Mammary epithelial cell (primary cell): ENCODE measurements at regions of chr17 and their contacts with region 1.

Region 1: GRCh38 chr17:42819944-42820535 is 4.0 kb downstream of the BECN1 start:
- DNase-seq: peak; percentile 32
- H3K4me3 ChIP-seq: no peak overlapping the region
- H3K27ac ChIP-seq: no peak overlapping the region
- H3K4me1 ChIP-seq: peaks cover 6% of the 10 kb centered on the region
- H3K27me3 ChIP-seq: no peaks in the 10 kb centered on the region
- CTCF ChIP-seq: peak; percentile 75 to 90

Region 2: GRCh38 chr17:42577532-42578281 is 242.3 kb before region 1 on chr17 and contains the start of gene PSMC3IP:
- CTCF ChIA-PET with region 1: no interaction called
- dilution Hi-C with region 1: no loop called
- in situ Hi-C with region 1: loop called in 1 of 2 experiments (anchors 25 kb)
- intact Hi-C with region 1: loop called (anchors 1 kb)
- DNase-seq: peak; percentile 94
- H3K4me3 ChIP-seq: peak within 1 kb of the TSS; percentile 67 to 78 (median 73)
- H3K27ac ChIP-seq: peak within 1 kb of the TSS; percentile 58
- H3K4me1 ChIP-seq: peaks cover 16% of the 10 kb centered on the region
- H3K27me3 ChIP-seq: no peaks in the 10 kb centered on the region
- CTCF ChIP-seq: peak; percentile 9 to 54
- total RNA-seq, gene PSMC3IP: 2.2 to 25.2 TPM

Region 3: DNA sequence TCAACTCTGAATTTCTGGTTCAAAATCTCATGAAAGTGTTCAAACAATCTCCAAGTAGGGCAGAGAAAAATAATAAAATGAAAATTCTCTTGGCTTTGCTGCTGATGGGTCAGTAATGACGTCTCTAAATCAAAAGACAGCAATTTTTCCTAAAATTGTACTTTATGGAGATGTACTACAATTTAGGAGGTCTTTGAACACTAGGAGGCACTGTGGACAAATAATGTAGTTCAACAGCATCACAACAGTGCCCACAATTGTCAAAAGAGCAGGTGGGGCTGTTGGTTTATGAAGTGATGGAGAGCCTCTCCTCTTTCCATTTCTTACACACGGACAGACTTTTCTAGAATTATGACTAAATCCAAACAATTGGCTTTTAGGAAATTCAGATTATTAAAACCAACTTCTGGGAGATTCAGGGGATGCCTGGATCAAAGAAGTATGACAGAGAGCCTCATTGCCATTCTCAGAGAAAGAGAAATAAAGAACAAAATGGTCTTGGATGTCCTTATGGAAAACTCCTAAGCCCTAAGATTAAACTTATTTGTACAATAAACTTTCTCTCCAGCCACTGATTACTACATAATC is 99.0 kb before region 1 on chr17:
- CTCF ChIA-PET with region 1: no interaction called
- dilution Hi-C with region 1: no loop called
- in situ Hi-C with region 1: no loop called
- intact Hi-C with region 1: loop called (anchors 1 kb)
- DNase-seq: peak; percentile 43
- H3K4me3 ChIP-seq: no peak overlapping the region
- H3K27ac ChIP-seq: no peak overlapping the region
- H3K4me1 ChIP-seq: no peaks in the 10 kb centered on the region
- H3K27me3 ChIP-seq: no peaks in the 10 kb centered on the region
- CTCF ChIP-seq: peak; percentile 59 to 65

Region 4: GRCh38 chr17:42760652-42761581 is 59.1 kb before region 1 on chr17 and contains the start of gene RAMP2:
- CTCF ChIA-PET with region 1: interaction called, 10 read pairs
- dilution Hi-C with region 1: no loop called
- in situ Hi-C with region 1: no loop called
- intact Hi-C with region 1: no loop called
- DNase-seq: no peak
- H3K4me3 ChIP-seq: peak within 1 kb of the TSS; percentile 25 to 33 (median 31)
- H3K27ac ChIP-seq: no peak within 1 kb of the TSS
- H3K4me1 ChIP-seq: peaks cover 10% of the 10 kb centered on the region
- H3K27me3 ChIP-seq: peaks cover 17% of the 10 kb centered on the region
- CTCF ChIP-seq: no peak
- total RNA-seq, gene RAMP2: not detected

Region 5: DNA sequence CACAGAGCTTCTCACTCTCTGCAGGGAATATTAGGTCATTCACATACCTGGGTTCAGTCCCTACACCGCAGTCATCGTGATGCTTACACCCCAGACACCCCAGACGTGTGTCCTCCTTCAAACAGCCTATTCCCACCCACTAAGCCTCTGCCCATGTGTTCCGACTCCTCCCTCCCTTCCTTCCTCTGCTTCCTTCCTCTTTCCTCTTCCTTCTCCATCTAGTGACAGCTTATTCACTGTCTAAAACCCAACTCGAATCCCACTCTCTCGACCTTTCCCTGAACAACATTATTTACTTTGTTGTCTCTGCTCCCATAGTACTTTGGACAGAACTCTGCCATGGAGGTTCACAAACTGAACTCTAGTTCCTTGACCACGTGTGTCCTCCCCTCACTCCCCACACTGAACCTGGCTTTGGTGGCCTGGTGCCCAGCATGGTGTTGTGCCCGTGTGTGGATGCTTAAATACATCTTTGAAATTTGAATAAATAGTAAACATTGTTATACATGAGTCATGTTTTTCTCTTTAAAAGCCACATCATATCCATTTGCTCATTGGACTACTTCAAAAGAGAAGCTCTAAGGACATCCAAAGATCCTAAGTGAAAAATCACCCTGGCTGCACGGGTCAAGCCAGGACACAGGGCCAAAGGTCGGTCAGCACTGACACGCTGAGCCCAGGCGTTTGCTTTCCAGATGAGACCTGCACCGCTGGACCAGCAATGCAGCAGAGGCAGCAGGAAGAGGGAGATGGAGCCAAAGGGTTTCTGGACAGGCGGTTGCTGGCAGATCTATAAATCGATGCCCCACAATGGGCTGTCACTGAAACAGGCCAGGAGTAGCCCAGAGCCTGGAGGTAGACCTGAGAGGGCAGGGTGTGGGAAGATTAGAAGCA is 66.5 kb after region 1 on chr17:
- CTCF ChIA-PET with region 1: no interaction called
- dilution Hi-C with region 1: loop called (anchors 5 kb)
- in situ Hi-C with region 1: no loop called
- intact Hi-C with region 1: no loop called
- DNase-seq: no peak
- H3K4me3 ChIP-seq: no peak overlapping the region
- H3K27ac ChIP-seq: no peak overlapping the region
- H3K4me1 ChIP-seq: no peaks in the 10 kb centered on the region
- H3K27me3 ChIP-seq: no peaks in the 10 kb centered on the region
- CTCF ChIP-seq: no peak